IMR-90 (cell line): ENCODE measurements at regions of chr4 and their contacts with region 1.

Region 1: GRCh38 chr4:162163852-162164759 is at the start of gene FSTL5:
- DNase-seq: peak; percentile 2
- ATAC-seq: no peak
- H3K4me3 ChIP-seq: no peak within 1 kb of the TSS
- H3K27ac ChIP-seq: no peak within 1 kb of the TSS
- H3K4me1 ChIP-seq: no peaks in the 10 kb centered on the region
- H3K27me3 ChIP-seq: no peaks in the 10 kb centered on the region
- CTCF ChIP-seq: no peak
- POLR2A ChIP-seq: no peak
- RAD21 ChIP-seq: no peak
- total RNA-seq, gene FSTL5: under 0.01 TPM in 2 replicates

Region 2: DNA sequence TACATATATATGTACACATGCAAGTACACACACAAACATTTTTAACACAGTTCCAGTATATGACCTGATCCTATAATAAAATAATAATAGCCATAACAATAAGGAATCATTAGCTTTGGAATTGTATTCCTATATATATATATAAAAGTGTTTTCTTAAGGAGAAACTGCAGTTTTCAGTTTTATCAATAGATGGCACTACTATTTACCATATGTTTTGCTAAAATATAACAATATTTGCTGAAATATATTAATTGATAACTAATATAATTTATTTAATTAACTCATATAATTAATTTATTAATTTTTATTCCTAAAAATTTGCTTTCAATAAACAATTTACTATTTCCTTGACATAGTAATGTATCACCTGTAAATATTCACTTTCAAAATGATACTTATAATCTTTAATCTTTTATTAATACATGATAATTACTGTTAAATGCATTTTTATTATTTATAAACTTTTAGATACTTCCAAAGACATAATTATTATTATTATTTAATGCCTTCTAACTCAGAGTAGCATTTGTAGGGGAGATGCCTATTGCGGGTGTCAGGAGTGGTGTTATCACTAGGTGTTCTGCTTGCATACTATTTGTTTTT is 599.8 kb before region 1 on chr4:
- CTCF ChIA-PET with region 1: interaction called, 3 read pairs
- POLR2A ChIA-PET with region 1: no interaction called
- dilution Hi-C with region 1: no loop called
- in situ Hi-C with region 1: no loop called
- intact Hi-C with region 1: loop called (anchors 10 kb)
- DNase-seq: peak; percentile 23
- ATAC-seq: no peak
- H3K4me3 ChIP-seq: no peak overlapping the region
- H3K27ac ChIP-seq: no peak overlapping the region
- H3K4me1 ChIP-seq: no peaks in the 10 kb centered on the region
- H3K27me3 ChIP-seq: no peaks in the 10 kb centered on the region
- CTCF ChIP-seq: peak; percentile 32
- POLR2A ChIP-seq: no peak
- RAD21 ChIP-seq: no peak